ENCODE measurements at regions of chr20 and their contacts with region 1.

Region 1: GRCh38 chr20:17611540-17612286 is 41.8 kb downstream of the DSTN start:
- DNase-seq: peak in 1 of 2 donors; percentile 87
- H3K4me3 ChIP-seq: no peak overlapping the region
- H3K27ac ChIP-seq: peak overlapping the region; percentile 66
- H3K4me1 ChIP-seq: peaks cover 65% of the 10 kb centered on the region
- H3K27me3 ChIP-seq: no peaks in the 10 kb centered on the region
- CTCF ChIP-seq: no peak
- POLR2A ChIP-seq: no peak

Region 2: GRCh38 chr20:15742087-15742486 is 1869.6 kb before region 1 on chr20:
- intact Hi-C with region 1: no loop called
- DNase-seq: no peak
- H3K4me3 ChIP-seq: no peak overlapping the region
- H3K27ac ChIP-seq: no peak overlapping the region
- H3K4me1 ChIP-seq: no peaks in the 10 kb centered on the region
- H3K27me3 ChIP-seq: no peaks in the 10 kb centered on the region
- CTCF ChIP-seq: no peak
- POLR2A ChIP-seq: no peak

Region 3: DNA sequence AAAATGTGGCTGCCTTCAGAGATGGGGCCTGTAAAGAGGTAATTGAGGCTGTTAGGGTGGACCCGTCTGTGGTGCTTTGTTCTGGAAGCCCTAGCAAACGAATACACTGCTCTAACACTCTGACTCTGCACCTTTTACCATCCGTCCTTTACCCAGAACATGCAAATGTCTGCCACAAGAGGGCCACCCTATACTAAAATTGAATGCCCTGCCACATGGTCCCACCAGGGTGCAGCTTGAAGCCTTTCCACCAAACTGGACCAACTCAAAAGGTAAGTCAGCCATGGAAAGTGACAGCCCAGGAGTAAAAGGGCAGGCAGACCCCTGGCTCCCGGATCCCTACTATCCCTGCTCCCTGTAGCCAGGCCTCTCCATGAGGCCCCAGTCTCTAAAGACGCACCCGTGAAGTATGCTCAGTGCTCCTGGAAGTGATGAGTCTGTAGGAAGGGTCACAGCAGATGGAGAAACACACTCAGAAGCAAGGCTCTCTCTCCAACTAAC is 74.7 kb before region 1 on chr20:
- intact Hi-C with region 1: loop called (anchors 2 kb)
- DNase-seq: no peak
- H3K4me3 ChIP-seq: no peak overlapping the region
- H3K27ac ChIP-seq: no peak overlapping the region
- H3K4me1 ChIP-seq: peaks cover 15% of the 10 kb centered on the region
- H3K27me3 ChIP-seq: no peaks in the 10 kb centered on the region
- CTCF ChIP-seq: peak; percentile 52 to 98 (median 85)
- POLR2A ChIP-seq: no peak

Region 4: DNA sequence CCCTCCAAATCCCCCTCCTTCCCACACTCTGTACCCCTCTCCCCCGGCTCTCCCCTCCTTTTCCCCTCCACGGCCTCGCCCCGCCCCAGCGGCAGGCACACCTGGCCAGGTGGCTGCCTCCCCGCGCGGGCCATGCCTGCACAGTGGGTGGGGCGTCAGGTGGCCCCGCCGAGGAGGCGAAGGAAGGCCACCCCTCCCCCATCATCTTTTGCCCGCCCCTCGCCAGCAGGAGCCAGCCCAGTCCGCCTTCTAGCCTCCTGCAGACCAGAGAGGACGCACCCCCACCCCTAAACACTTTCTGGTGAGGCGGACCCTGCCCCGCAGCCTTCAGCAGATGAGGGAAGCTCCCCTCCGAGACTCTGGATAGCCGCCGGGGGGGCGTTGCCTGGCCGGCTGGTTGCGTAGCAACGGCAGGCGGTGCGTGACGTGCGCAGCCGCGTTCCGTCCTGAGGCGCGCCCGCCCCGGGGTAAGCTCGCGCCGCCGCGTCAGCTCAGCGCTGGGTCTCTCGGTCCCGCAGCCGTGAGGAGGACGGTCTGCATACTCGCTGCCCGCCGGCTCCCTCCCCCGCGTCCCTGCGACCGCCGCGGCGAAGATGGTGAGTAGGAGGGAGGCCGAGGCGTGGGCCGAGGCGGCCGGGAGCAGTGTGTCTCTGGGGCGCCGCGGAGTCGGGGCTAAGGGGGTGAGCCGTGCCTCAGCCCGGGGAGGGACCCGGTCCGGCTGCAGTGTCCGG is 41.9 kb before region 1 on chr20 and contains the start of gene DSTN:
- intact Hi-C with region 1: loop called (anchors 2 kb)
- DNase-seq: peak in 1 of 2 donors; percentile 96
- H3K4me3 ChIP-seq: peak within 1 kb of the TSS; percentile 94 to 96
- H3K27ac ChIP-seq: peak within 1 kb of the TSS; percentile 99
- H3K4me1 ChIP-seq: peaks cover 51% of the 10 kb centered on the region
- H3K27me3 ChIP-seq: no peaks in the 10 kb centered on the region
- CTCF ChIP-seq: no peak
- POLR2A ChIP-seq: peak in 1 of 2 donors; percentile 96
- total RNA-seq, gene DSTN: 326 TPM

Region 5: GRCh38 chr20:17636523-17637412 is 25.1 kb after region 1 on chr20:
- intact Hi-C with region 1: no loop called
- DNase-seq: no peak
- H3K4me3 ChIP-seq: no peak overlapping the region
- H3K27ac ChIP-seq: peak overlapping the region; percentile 62
- H3K4me1 ChIP-seq: peaks cover 57% of the 10 kb centered on the region
- H3K27me3 ChIP-seq: no peaks in the 10 kb centered on the region
- CTCF ChIP-seq: no peak
- POLR2A ChIP-seq: no peak